Activated CD8-positive, alpha-beta memory T cell treated with anti-CD3 and anti-CD28 coated beads, Interleukin-2, amount 10 ng/mL, durations not matched to agents 7 days and 5 days (primary cell): ENCODE measurements at regions of chr9 and their contacts with region 1.

Region 1: DNA sequence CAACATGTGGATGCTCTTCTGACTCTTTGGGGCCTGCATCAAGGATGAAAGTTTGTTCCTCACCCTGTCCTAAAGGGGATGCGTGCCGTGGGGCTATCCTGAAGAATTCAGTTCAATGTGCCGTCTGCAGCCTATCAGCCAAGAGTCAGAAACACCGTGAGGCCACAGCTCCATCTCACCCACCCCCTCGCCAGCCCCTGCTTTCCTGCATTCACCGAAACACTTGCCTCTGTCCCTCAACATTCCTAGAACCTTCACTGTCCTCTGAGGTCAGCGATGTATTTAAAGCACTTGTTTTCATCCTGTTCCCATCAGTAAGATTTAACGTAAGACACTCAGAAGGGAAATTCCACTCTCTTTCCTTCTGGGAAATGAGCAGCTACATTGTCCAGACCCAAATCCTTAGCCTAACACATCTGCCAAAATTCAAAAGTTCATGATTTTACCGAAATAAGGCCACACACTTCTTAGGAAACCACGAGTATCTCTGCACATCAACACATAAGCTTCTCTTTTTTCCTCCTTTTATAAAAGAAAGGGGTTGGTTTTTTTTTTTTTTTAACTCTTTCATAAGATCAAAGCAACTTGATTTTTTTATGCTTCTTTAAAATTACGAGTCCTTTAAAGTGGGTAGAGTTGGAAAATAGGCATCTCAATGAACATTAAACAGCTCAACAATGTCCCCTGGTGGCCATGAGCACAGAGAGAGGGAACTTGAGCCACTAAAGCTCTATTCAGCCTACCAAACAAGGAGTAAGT is 100.7 kb downstream of the SUSD1 start:
- DNase-seq: peak; percentile 74
- ATAC-seq: peak; percentile 61
- H3K4me3 Mint-ChIP-seq: no peak overlapping the region
- H3K27ac Mint-ChIP-seq: no peak overlapping the region
- H3K4me1 Mint-ChIP-seq: peaks cover 18% of the 10 kb centered on the region
- H3K27me3 Mint-ChIP-seq: peaks cover 3% of the 10 kb centered on the region

Region 2: DNA sequence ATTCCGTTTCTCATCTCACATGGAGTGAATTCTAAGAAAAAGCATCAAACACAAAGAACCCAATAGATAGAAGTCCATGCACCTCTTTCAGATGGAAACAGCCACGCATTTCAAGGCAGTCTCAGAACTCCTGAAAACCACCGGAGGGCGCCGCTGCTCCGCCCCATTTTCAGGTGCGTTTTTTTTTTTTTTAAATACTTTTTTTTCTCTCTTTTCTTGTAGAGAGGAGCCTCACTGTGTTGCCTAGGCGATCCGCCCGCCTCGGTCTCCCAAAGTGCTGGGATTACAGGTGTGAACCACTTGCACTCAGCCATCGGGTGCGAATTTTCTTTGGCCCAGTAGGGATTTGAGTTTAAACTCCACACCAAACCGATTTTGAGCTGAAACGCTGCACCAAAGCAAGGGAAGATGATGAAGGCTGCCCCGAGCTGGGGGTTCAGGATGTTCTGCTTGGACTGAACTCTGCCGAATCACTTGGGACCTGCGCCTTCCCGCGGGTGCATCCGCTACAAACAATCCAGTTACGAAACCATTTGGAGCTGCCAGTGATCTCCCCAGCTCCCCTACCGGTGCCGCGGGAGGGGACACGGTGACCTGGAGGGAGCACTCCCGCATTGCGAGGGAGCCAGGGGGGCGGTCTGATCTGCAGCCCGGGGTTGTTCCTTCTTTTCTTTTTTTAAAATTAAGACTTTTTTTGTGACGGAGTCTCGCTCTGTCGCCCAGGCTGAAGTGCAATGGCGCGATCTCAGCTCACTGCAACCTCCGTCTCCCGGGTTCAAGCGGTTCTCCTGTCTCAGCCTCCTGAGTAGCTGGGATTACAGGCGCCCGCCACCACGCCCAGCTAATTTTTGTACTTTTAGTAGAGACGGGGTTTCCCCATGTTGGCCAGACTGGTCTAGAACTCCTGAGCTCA is 476.4 kb before region 1 on chr9:
- CTCF ChIA-PET with region 1: interaction called, 13 read pairs
- DNase-seq: peak; percentile 65
- ATAC-seq: peak; percentile 64
- H3K4me3 Mint-ChIP-seq: peak overlapping the region; percentile 77
- H3K27ac Mint-ChIP-seq: no peak overlapping the region
- H3K4me1 Mint-ChIP-seq: peaks cover 17% of the 10 kb centered on the region
- H3K27me3 Mint-ChIP-seq: peaks cover 63% of the 10 kb centered on the region

Region 3: DNA sequence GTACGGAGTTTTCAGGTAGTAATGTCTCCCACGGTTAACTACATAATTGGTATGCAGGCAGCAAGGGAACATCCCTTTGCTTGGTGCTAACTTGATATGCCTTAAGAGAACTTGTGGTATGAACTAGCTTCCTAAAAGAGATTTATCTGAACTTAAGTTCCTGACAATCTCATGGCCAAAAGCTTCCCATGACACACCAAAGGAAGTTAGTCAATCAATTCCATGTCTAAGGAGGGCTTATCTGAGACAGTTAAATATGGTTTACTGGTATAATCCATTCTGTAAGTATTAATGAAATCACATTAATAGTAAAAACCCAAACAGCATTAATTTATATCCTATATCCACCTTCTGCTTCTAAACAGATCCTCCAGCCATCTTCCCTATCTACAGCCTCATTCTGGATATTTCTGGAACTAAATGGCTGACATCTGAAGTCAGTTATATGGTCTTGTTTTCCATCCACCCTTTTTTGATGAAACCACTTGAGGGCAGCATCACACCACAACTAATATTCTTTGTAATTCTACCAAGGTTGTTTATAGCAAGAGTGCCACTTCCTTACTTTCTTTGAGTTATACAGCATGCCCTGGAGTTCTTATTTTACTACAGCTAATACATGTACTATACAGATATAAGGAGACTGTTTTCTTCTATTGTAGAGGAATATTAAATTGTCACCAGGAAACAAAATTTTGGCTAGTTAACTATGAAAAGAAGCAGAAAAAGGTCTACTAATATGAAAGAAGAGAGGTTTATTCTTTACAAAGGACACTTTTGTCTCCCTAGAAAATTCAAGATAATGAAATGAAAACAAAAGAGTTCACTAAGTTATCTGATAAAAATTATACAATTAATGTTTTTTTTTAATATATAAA is 314.4 kb before region 1 on chr9:
- CTCF ChIA-PET with region 1: interaction called, 32 read pairs
- DNase-seq: peak; percentile 50
- ATAC-seq: peak; percentile 47
- H3K4me3 Mint-ChIP-seq: no peak overlapping the region
- H3K27ac Mint-ChIP-seq: no peak overlapping the region
- H3K4me1 Mint-ChIP-seq: peaks cover 2% of the 10 kb centered on the region
- H3K27me3 Mint-ChIP-seq: no peaks in the 10 kb centered on the region

Region 4: GRCh38 chr9:111896353-111896958 is 178.0 kb before region 1 on chr9 and contains the start of gene UGCG:
- CTCF ChIA-PET with region 1: interaction called, 14 read pairs
- DNase-seq: peak; percentile 87
- ATAC-seq: peak; percentile 92
- H3K4me3 Mint-ChIP-seq: peak within 1 kb of the TSS; percentile 82
- H3K27ac Mint-ChIP-seq: peak within 1 kb of the TSS; percentile 83
- H3K4me1 Mint-ChIP-seq: peaks cover 6% of the 10 kb centered on the region
- H3K27me3 Mint-ChIP-seq: no peaks in the 10 kb centered on the region
- total RNA-seq, gene UGCG: 14.4 to 21.6 TPM

Region 5: GRCh38 chr9:112002131-112002846 is 72.1 kb before region 1 on chr9:
- CTCF ChIA-PET with region 1: interaction called, 10 read pairs
- DNase-seq: no peak
- ATAC-seq: no peak
- H3K4me3 Mint-ChIP-seq: no peak overlapping the region
- H3K27ac Mint-ChIP-seq: no peak overlapping the region
- H3K4me1 Mint-ChIP-seq: peaks cover 4% of the 10 kb centered on the region
- H3K27me3 Mint-ChIP-seq: peaks cover 25% of the 10 kb centered on the region